ENCODE measurements at regions of chr9 and their contacts with region 1.

Region 1: GRCh38 chr9:128361986-128362646 is 9.1 kb upstream of the URM1 start:
- DNase-seq: peak; percentile 87

Region 2: DNA sequence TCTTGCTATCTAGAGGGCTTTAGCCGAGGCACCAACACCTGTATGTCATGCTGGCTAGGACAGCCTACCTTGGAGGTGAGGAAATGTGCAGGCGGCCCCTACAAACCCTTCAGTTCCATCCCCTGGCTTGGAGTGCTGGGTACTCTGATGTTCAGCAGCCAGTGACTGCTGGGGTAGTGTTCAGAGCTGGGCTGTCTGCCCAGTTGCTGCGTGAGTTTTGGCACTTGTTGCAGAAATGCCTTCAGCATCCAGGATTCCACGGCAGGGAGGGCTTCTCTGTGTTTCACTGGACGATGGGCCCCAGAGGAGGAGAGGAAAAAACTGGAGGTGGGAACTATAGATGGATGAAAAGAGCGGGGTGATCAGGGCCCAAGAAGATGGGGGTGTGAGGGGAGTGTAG is 75.7 kb before region 1 on chr9:
- CTCF ChIA-PET with region 1: no interaction called
- POLR2A ChIA-PET with region 1: no interaction called
- DNase-seq: no peak

Region 3: DNA sequence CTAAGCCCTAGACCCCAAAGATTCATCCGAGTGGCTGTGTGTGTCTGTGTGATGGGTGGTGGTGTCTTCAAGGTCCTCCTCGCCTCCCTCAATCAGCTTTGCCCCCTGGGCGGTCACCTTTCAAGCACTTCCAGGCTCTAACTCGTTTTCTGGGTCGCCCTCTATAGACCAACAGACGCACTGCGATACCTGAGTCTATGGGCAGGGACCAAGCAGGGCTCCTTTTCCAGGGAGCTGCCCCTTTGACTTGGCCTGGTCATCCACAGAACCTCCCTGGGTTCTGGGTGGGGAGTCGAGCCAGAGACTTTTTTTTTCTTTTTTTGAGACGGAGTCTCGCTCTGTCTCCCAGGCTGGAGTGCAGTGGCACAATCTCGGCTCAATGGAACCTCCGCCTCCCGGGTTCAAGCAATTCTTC is 20.7 kb before region 1 on chr9:
- CTCF ChIA-PET with region 1: interaction called, 11 read pairs
- POLR2A ChIA-PET with region 1: no interaction called
- DNase-seq: peak; percentile 80

Region 4: DNA sequence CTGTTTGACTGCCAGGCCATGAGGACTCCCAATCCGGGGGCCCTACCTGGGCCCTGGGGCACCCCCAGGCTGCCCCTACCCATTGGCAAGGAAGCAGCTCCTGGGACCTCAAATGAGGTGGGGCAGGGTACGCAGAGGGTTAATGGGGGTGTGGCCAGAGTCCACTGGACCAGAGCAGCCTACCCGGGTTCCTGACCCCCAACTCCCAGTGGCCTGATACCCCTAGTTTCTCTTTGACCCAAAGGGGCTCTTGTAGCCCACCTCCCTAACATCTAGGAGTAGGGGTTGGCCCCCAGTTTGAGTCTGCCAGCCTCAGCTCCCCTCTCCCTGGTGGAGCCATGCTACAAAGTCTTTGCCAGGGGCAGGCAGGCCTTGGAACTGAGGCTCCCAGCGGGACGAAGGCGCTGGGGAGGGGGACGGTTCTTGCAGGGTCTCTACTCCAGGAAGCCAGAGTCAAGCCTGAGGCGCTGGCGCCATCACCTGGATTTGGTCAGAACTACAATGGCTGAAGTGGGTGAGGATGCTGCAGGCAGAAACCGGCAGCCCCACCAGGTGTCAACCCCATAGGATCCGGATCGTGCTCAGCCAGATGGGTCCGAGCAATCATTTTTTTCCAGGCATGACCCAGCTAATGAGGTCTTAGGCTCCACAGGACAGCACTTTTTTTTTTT is 50.1 kb after region 1 on chr9:
- CTCF ChIA-PET with region 1: interaction called, 34 read pairs
- POLR2A ChIA-PET with region 1: interaction called, 4 read pairs
- DNase-seq: peak; percentile 85

Region 5: GRCh38 chr9:128792978-128793686 is 431.0 kb after region 1 on chr9:
- CTCF ChIA-PET with region 1: no interaction called
- POLR2A ChIA-PET with region 1: no interaction called
- DNase-seq: no peak

Measured in HEK293T (cell line).